ENCODE measurements at regions of chr2 and their contacts with region 1.

Region 1: GRCh38 chr2:135265960-135266490 is 213.9 kb downstream of the RAB3GAP1 start:
- DNase-seq: no peak
- ATAC-seq: no peak
- H3K4me3 ChIP-seq: no peak overlapping the region
- H3K27ac ChIP-seq: no peak overlapping the region
- H3K4me1 ChIP-seq: no peaks in the 10 kb centered on the region
- H3K27me3 ChIP-seq: no peaks in the 10 kb centered on the region
- CTCF ChIP-seq: no peak

Region 2: DNA sequence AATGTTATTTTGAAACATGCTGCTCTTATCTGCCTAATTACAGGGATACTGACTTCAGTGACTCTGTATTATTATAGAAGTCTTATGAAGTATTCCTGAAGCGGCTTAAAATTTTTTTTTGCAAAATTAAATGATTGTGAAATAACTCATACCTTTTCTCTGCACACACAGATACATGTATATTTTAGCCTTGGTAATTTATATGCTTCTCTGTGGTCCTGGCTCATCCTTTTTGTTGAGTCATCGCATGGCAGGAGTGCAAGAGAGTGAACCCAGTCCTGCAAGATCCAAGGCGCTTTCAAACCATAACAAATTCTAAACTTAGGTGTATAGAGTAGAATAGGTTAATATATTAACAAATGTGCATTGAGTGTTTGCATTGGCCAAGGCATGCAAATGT is 338.8 kb before region 1 on chr2:
- intact Hi-C with region 1: no loop called
- DNase-seq: no peak
- ATAC-seq: no peak
- H3K4me3 ChIP-seq: no peak overlapping the region
- H3K27ac ChIP-seq: peak overlapping the region in 1 of 10 donors; percentile 0
- H3K4me1 ChIP-seq: peaks cover 3 to 85% (median 63%) of the 10 kb centered on the region in 9 donors
- H3K27me3 ChIP-seq: no peaks in the 10 kb centered on the region
- CTCF ChIP-seq: no peak

Region 3: DNA sequence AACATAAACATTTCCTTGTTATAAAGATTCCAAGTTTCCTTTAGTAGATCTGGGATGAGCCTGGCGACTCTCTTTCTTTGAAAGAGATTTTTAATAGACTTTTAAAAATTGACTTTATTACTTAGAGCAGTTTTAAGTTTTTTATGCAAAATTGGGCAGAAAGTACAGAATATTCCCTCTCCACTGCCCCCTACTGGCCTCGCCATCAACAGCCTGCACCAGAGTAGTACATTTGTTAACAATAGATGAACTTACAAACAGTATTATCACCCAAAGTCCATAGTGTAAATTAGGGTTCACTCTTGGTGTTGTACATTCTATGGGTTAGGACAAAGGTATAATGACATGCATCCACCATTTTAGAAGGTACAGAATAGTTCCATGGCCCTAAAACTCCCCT is 222.7 kb before region 1 on chr2:
- intact Hi-C with region 1: no loop called
- DNase-seq: no peak
- ATAC-seq: no peak
- H3K4me3 ChIP-seq: no peak overlapping the region
- H3K27ac ChIP-seq: no peak overlapping the region
- H3K4me1 ChIP-seq: no peaks in the 10 kb centered on the region
- H3K27me3 ChIP-seq: peaks cover 0 to 11% (median 0%) of the 10 kb centered on the region in 7 donors
- CTCF ChIP-seq: peak in 8 of 9 donors; percentile 7 to 57 (median 34)

Region 4: GRCh38 chr2:136049011-136049742 is 783.2 kb after region 1 on chr2:
- intact Hi-C with region 1: loop called in 1 of 10 experiments (anchors 5 kb)
- DNase-seq: no peak
- ATAC-seq: no peak
- H3K4me3 ChIP-seq: no peak overlapping the region
- H3K27ac ChIP-seq: no peak overlapping the region
- H3K4me1 ChIP-seq: peaks cover 0 to 15% (median 0%) of the 10 kb centered on the region in 9 donors
- H3K27me3 ChIP-seq: no peaks in the 10 kb centered on the region
- CTCF ChIP-seq: no peak